ENCODE measurements at regions of chr2 and their contacts with region 1.

Region 1: DNA sequence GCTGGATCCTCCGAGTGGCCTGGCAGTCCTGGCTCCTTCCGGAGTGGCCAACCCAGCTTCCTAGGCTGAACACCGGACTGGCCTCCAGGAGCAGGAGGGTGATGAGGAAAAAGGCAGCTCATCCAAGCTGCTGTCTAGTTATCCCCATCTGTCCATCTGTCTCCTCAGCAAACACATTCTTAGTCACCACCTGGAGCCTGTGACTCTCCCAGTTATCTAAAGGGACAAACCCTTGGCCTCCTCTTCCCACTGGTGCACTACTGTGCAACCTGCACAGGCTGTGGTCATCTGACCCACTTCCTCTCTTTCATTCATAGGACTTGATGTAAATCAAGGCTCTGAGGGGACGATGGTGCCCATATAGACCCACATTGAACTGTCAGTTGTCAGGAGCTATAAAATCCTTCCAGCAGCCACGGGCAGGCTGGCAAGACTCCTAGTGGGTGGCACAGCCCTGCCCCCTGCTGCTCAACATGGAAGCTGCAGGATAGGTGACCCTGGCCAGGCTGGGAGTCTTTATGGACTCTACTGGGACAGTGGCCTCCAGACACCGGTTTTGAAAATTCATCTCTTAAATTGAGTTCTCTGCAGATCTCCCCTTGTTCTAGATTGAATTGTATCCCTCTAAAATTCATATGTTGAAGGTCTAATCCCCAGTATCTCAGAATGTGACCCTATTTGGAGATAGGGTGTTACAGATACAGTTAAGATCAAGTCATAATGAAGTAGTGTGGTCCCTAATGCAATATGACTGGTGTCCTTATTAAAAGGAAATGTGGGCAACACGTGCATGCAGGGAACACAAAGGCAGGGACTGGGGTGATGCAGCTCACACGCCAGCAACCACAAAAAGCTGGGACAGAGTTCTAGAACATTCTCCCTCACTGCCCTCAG is 29.3 kb upstream of the DUSP2 start:
- DNase-seq: peak; percentile 92
- H3K4me3 Mint-ChIP-seq: no peak overlapping the region
- H3K27ac Mint-ChIP-seq: peak overlapping the region; percentile 52
- H3K4me1 Mint-ChIP-seq: peaks cover 17% of the 10 kb centered on the region
- H3K27me3 Mint-ChIP-seq: no peaks in the 10 kb centered on the region

Region 2: DNA sequence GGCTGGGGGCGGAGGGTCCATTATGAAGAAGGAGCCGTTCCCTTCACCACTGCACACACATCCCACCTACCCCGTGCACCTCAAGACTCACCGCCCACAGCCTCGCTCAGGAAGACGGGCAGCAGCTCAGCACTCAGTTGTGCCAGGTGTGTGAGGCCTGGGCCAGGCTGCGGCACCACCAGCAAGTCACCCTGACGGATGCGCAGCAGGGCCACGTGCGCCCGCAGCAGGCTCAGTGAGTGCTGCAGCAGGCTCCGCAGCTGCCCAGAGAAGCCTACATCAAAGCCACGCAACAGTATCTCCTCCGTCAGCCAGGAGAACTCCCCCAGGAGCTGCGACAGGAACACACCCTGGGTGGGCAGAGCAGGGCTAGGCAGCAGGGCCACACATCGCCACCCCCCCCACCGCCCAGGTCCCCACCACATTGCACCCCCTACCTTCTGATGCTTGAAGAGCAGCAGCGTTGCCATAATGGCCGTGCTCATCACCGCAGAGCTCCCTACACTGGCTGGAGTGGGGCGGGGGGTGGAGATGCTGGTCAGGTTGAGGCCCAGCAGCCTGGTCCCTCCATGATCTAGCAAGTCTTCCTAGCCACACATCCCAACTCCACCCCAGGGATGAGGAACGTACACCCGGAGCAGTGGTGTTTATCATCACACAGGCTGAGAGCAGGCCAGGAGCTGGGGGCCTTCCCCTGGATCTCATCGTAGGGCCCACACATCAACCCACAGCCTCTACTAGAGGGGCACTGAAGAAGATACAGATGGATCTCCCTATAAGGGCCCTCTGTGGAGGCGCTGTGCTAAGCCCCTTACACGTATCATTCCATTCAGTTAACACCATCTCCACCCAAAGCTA is 149.9 kb before region 1 on chr2:
- CTCF ChIA-PET with region 1: interaction called, 14 read pairs
- intact Hi-C with region 1: no loop called
- DNase-seq: no peak
- H3K4me3 Mint-ChIP-seq: no peak overlapping the region
- H3K27ac Mint-ChIP-seq: no peak overlapping the region
- H3K4me1 Mint-ChIP-seq: peaks cover 2% of the 10 kb centered on the region
- H3K27me3 Mint-ChIP-seq: no peaks in the 10 kb centered on the region

Region 3: DNA sequence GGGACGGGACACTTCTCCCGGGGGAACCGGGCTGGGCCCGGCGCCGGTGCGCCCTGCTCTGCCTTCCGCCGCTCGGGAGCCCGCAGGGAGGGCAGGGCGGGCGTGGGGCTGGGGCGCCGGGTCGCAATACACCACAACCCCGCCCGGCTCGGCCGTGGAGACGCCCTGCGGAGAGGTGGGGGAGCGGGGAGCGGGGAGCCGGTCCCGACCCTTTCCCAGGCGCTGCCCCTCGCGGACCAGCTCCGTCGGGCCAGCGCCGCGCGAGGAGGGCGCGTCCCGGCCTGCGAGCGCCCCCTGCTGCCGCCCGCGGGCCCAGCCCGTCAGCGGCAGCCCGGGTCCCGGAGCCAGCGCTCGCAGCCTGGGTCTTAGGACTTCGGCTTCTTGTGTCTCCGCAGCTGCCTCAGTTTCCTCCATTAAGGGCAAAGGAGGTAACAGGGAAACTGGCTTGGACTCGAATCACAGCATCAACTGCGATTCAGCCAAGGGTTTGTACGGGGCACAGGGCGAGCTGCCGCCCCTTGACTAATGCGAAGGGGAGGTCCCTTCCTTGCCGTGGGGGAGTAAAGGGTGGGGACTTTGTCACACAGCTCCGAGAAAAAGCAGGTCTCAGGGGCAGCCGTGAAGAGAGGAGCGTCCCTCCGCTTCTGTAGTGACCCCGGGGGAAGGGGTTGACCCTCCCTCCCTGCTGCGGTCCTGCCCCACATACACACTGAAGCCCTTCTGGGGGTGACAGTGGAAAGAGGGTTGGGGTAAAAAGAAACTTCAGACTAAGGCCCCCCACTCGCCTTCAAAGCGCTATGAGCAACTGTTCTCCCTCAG is 57.4 kb before region 1 on chr2:
- CTCF ChIA-PET with region 1: interaction called, 43 read pairs
- intact Hi-C with region 1: no loop called
- DNase-seq: peak; percentile 54
- H3K4me3 Mint-ChIP-seq: peak overlapping the region; percentile 72
- H3K27ac Mint-ChIP-seq: no peak overlapping the region
- H3K4me1 Mint-ChIP-seq: peaks cover 8% of the 10 kb centered on the region
- H3K27me3 Mint-ChIP-seq: peaks cover 33% of the 10 kb centered on the region

Region 4: DNA sequence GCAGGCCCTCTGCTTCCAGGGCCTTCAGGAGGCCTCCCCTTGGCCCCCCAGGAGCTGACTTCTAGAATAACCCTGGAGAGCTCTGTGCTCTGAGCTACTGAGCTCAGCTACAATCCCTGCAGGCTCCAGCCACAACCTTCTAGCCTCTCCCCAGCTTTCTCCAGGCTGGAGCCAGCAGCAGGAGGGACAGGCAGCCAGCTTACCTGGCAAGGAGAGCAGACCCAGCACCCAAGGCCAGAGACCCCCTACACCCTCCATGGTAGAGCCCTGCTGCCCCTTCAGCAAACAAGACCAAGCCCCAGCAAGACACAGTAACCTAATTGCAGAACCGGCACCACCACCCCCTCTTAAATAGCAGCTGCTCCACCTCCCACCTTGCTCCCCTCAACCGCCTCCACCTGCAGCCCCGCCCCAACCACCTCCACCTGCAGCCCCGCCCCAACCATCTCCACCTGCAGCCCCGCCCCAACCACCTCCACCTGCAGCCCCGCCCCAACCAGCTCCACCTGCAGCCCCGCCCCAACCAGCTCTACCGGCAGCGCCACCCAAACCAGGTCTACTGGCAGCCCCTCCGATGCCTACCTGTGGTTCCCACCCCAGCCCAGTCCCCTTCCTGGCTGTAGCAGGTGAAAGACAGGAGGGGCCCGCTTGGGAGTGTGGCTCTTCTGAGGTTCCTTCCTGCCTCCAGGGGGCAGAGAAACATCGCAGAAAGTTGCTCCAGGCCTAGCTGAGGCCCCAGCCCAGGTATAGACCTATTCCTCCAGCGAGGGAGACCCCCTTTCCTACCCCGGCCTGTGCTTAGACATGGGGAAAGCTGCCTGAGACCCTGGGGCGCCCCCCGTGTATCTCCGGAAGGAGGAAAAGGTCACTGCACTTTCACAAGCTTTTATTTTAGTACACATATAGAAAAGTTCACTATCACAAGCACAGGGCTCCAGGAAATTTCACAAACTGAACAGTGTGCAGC is 36.0 kb before region 1 on chr2 and contains the start of gene ASTL:
- CTCF ChIA-PET with region 1: interaction called, 482 read pairs
- intact Hi-C with region 1: loop called (anchors 1 kb)
- DNase-seq: peak; percentile 88
- H3K4me3 Mint-ChIP-seq: no peak within 1 kb of the TSS
- H3K27ac Mint-ChIP-seq: peak within 1 kb of the TSS; percentile 82
- H3K4me1 Mint-ChIP-seq: peaks cover 24% of the 10 kb centered on the region
- H3K27me3 Mint-ChIP-seq: no peaks in the 10 kb centered on the region
- total RNA-seq, gene ASTL: 2.5 to 2.6 TPM

Region 5: DNA sequence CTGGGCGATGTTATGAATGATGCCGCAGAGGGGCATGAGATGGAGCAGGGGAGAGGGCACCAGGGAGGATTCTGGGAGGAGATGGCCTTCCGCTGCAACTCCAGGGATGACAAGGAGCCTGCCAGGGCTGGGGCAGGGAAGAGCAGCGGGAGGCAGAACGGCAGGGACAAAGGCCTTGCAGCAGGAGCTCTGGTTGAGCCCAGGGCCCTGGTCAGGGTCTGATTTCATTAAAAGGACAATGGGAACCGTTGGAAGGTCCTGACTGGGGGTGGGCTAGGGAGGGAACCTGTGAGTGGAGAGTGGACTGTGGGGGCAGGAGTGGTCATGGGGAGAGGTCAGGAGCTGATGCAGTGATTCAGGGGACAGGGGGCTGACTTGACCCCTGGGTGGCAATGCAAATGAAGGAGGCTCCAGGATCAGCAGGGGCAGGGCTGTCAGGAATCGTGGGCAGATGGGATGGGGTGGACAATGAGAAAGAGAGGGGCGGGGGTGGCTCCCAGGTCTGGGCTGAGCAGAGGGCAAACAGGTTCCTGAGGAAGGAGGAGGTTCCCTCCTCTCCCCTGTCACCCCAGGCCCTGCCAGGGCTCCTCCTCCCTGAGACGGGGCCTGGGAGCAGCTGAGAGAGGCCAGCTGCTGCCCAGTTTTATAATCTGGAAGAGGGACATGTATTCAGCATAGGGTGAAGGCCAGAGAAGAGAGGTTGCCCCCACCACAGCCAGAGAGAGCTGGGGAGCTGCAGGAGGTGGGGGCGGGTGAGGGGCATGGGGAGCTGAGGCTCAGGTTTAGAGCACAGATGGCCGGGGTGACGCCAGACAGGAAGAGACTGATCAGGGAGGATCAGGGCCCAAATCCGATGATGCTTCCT is 22.0 kb before region 1 on chr2:
- CTCF ChIA-PET with region 1: interaction called, 482 read pairs
- intact Hi-C with region 1: no loop called
- DNase-seq: peak; percentile 3
- H3K4me3 Mint-ChIP-seq: no peak overlapping the region
- H3K27ac Mint-ChIP-seq: peak overlapping the region; percentile 66
- H3K4me1 Mint-ChIP-seq: peaks cover 90% of the 10 kb centered on the region
- H3K27me3 Mint-ChIP-seq: no peaks in the 10 kb centered on the region

Region 6: GRCh38 chr2:96157651-96158553 is 16.6 kb before region 1 on chr2:
- CTCF ChIA-PET with region 1: interaction called, 38 read pairs
- intact Hi-C with region 1: no loop called
- DNase-seq: peak; percentile 99
- H3K4me3 Mint-ChIP-seq: peak overlapping the region; percentile 75
- H3K27ac Mint-ChIP-seq: peak overlapping the region; percentile 95
- H3K4me1 Mint-ChIP-seq: peaks cover 85% of the 10 kb centered on the region
- H3K27me3 Mint-ChIP-seq: no peaks in the 10 kb centered on the region